Activated naive CD4-positive, alpha-beta T cell treated with anti-CD3 and anti-CD28 coated beads for 36 hours (primary cell): ENCODE measurements at regions of chr6 and their contacts with region 1.

Region 1: GRCh38 chr6:79672631-79673111 is 41.5 kb downstream of the SH3BGRL2 start:
- DNase-seq: no peak
- H3K4me3 Mint-ChIP-seq: no peak overlapping the region
- H3K27ac Mint-ChIP-seq: peak overlapping the region; percentile 43
- H3K4me1 Mint-ChIP-seq: peaks cover 32% of the 10 kb centered on the region
- H3K27me3 Mint-ChIP-seq: no peaks in the 10 kb centered on the region

Region 2: GRCh38 chr6:79233611-79234149 is 439.0 kb before region 1 on chr6:
- CTCF ChIA-PET with region 1: no interaction called
- intact Hi-C with region 1: loop called (anchors 5 kb)
- DNase-seq: peak; percentile 73
- H3K4me3 Mint-ChIP-seq: peak overlapping the region; percentile 95
- H3K27ac Mint-ChIP-seq: peak overlapping the region; percentile 78
- H3K4me1 Mint-ChIP-seq: peaks cover 14% of the 10 kb centered on the region
- H3K27me3 Mint-ChIP-seq: no peaks in the 10 kb centered on the region

Region 3: DNA sequence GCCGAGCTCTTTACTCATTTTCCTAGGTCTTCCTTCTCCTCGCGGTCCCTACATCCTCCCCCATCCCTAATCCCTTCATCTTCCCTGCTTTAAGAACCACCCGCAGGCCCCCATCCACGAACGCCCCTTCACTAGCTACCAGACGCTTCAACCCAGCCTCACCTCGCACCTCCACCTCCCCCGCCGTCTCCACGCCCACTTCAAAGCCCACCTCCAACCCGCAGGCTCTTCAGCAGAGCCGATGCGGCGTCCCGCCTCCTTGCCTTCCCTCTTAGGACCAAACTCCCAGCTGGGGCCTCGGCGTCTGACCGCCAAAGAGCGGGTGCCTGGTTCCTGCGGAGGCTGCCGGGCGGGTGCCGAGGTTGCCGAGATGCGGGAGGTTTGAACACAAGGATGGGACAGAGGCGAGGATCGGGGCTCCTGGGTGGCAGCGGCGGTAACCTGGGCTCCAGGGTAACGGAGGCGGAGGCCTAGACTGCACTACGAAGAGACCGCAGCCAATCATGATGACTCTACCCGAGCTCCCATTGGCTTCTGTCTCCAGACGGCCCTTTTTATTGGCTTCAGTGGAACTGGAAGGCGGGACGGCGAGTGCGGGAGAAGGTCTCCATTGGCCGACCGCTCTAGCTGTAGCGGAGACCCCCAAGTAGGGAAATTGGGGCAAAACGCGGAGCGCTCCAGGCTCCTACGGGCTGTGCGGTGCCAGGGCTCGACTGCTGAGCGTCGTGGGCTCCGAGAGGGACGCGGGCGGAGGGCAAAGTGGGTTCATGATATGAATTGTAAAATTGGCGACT is 135.5 kb before region 1 on chr6 and contains the start of gene LCA5:
- CTCF ChIA-PET with region 1: interaction called, 4 read pairs
- intact Hi-C with region 1: loop called (anchors 1 kb)
- DNase-seq: peak; percentile 90
- H3K4me3 Mint-ChIP-seq: no peak within 1 kb of the TSS
- H3K27ac Mint-ChIP-seq: no peak within 1 kb of the TSS
- H3K4me1 Mint-ChIP-seq: no peaks in the 10 kb centered on the region
- H3K27me3 Mint-ChIP-seq: peaks cover 8% of the 10 kb centered on the region
- total RNA-seq, gene LCA5: 0.22 to 0.29 TPM

Region 4: GRCh38 chr6:79630883-79631692 is 41.6 kb before region 1 on chr6 and contains the start of gene SH3BGRL2:
- CTCF ChIA-PET with region 1: interaction called, 7 read pairs
- intact Hi-C with region 1: loop called (anchors 1 kb)
- DNase-seq: peak; percentile 51
- H3K4me3 Mint-ChIP-seq: peak within 1 kb of the TSS; percentile 77
- H3K27ac Mint-ChIP-seq: no peak within 1 kb of the TSS
- H3K4me1 Mint-ChIP-seq: peaks cover 8% of the 10 kb centered on the region
- H3K27me3 Mint-ChIP-seq: peaks cover 32% of the 10 kb centered on the region
- total RNA-seq, gene SH3BGRL2: 0.62 to 0.76 TPM

Region 5: GRCh38 chr6:79657238-79657637 is 15.4 kb before region 1 on chr6:
- CTCF ChIA-PET with region 1: interaction called, 5 read pairs
- intact Hi-C with region 1: loop called (anchors 2 kb)
- DNase-seq: no peak
- H3K4me3 Mint-ChIP-seq: no peak overlapping the region
- H3K27ac Mint-ChIP-seq: no peak overlapping the region
- H3K4me1 Mint-ChIP-seq: peaks cover 7% of the 10 kb centered on the region
- H3K27me3 Mint-ChIP-seq: no peaks in the 10 kb centered on the region

Region 6: DNA sequence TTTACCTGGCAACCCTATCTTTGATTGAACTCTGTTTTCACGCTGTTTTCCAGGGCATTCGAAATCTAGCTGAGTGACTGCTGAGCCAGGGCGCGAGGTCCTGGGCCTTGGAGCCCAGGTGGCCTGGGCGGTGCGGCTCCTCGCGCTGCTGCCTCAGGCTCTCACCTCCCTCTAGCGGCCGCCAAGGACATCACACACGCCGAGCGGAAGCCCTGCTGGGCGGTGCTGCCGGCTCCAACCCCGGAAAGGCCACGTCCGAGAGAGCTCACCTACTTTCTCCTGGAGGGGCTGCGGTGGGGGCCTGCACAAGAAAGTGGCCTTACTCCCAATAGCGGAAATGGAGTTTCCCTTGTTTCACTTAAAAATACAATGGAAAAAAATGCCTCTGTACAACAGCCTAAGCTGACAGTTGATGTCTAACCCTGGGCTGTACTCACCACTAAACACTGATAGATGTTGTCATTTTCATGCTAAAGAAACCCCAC is 197.0 kb after region 1 on chr6:
- CTCF ChIA-PET with region 1: interaction called, 3 read pairs
- intact Hi-C with region 1: loop called (anchors 1 kb)
- DNase-seq: peak; percentile 87
- H3K4me3 Mint-ChIP-seq: peak overlapping the region; percentile 41
- H3K27ac Mint-ChIP-seq: no peak overlapping the region
- H3K4me1 Mint-ChIP-seq: peaks cover 7% of the 10 kb centered on the region
- H3K27me3 Mint-ChIP-seq: peaks cover 4% of the 10 kb centered on the region